ENCODE measurements at regions of chr6 and their contacts with region 1.

Region 1: DNA sequence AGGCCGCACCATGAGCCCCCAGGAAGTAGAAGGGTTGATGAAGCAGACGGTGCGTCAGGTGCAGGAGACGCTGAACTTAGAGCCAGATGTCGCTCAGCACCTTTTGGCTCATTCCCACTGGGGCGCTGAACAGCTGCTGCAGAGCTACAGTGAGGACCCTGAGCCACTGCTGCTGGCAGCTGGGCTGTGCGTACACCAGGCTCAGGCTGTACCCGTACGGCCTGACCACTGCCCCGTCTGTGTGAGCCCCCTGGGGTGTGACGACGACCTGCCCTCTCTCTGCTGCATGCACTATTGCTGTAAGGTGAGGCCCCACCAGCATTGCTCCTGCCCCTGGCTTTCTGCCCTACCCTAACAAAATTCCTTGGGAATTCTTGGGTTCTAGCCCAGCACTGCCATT is 13.1 kb downstream of the DNPH1 start:
- DNase-seq: no peak
- H3K4me3 ChIP-seq: no peak overlapping the region
- H3K27ac ChIP-seq: no peak overlapping the region
- H3K4me1 ChIP-seq: peaks cover 5% of the 10 kb centered on the region
- H3K27me3 ChIP-seq: no peaks in the 10 kb centered on the region
- CTCF ChIP-seq: no peak

Region 2: GRCh38 chr6:43024436-43024835 is 191.8 kb before region 1 on chr6:
- CTCF ChIA-PET with region 1: no interaction called
- dilution Hi-C with region 1: no loop called
- in situ Hi-C with region 1: no loop called
- intact Hi-C with region 1: no loop called
- DNase-seq: no peak
- H3K4me3 ChIP-seq: no peak overlapping the region
- H3K27ac ChIP-seq: no peak overlapping the region
- H3K4me1 ChIP-seq: peaks cover 7% of the 10 kb centered on the region
- H3K27me3 ChIP-seq: no peaks in the 10 kb centered on the region
- CTCF ChIP-seq: no peak

Region 3: DNA sequence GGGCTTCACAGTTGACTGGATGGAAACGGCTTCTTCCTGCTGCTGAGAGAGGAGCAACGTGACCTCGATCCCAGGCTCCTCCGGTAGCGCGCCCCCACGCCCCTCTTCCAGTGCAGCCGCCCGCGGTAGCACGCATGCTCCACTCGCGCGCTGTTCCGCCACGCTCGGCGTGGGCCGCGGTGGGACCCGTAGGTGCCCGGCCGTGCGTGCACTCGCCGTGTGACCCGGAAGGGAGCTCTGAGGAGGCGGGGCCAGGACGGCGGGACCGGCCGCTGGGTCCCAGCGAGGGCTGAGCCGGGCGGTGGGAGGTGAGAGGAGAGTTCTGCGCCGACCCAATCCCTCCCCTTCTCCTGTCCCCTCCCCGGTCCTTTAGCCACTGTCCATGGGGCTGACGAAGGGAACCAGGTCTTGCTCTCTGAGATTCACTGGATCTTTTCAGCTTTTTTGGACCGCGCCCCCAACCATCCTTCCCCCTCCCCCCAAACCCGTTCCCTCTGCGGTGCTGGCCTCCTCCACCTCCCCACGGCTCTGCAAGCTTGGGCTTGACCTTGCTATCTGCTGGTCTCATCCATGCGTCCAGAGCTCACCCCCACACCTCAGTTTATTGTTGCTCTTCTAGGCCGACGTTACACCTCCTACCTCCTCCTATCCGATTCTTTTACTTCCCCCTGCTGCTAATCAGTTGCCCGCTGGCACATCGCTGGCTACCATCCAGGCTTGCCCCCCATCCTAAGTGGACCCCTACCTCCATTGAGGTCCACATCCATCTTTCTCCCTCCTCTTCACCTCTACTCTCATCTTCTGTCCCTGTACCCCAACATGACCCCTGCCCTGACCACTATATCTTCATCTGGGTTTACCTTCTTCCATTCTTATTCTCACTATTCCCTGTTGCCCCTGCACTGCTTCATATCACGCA is 34.0 kb before region 1 on chr6 and contains the start of gene CUL9:
- CTCF ChIA-PET with region 1: no interaction called
- dilution Hi-C with region 1: loop called (anchors 5 kb)
- in situ Hi-C with region 1: no loop called
- intact Hi-C with region 1: no loop called
- DNase-seq: peak; percentile 52
- H3K4me3 ChIP-seq: peak within 1 kb of the TSS; percentile 20 to 70 (median 42)
- H3K27ac ChIP-seq: peak within 1 kb of the TSS; percentile 14
- H3K4me1 ChIP-seq: peaks cover 40% of the 10 kb centered on the region
- H3K27me3 ChIP-seq: no peaks in the 10 kb centered on the region
- CTCF ChIP-seq: no peak
- total RNA-seq, gene CUL9: 25.0 to 48.2 TPM

Region 4: GRCh38 chr6:43257367-43258145 is 41.4 kb after region 1 on chr6:
- CTCF ChIA-PET with region 1: no interaction called
- dilution Hi-C with region 1: loop called (anchors 5 kb)
- in situ Hi-C with region 1: no loop called
- intact Hi-C with region 1: no loop called
- DNase-seq: no peak
- H3K4me3 ChIP-seq: no peak overlapping the region
- H3K27ac ChIP-seq: no peak overlapping the region
- H3K4me1 ChIP-seq: no peaks in the 10 kb centered on the region
- H3K27me3 ChIP-seq: no peaks in the 10 kb centered on the region
- CTCF ChIP-seq: no peak

Region 5: DNA sequence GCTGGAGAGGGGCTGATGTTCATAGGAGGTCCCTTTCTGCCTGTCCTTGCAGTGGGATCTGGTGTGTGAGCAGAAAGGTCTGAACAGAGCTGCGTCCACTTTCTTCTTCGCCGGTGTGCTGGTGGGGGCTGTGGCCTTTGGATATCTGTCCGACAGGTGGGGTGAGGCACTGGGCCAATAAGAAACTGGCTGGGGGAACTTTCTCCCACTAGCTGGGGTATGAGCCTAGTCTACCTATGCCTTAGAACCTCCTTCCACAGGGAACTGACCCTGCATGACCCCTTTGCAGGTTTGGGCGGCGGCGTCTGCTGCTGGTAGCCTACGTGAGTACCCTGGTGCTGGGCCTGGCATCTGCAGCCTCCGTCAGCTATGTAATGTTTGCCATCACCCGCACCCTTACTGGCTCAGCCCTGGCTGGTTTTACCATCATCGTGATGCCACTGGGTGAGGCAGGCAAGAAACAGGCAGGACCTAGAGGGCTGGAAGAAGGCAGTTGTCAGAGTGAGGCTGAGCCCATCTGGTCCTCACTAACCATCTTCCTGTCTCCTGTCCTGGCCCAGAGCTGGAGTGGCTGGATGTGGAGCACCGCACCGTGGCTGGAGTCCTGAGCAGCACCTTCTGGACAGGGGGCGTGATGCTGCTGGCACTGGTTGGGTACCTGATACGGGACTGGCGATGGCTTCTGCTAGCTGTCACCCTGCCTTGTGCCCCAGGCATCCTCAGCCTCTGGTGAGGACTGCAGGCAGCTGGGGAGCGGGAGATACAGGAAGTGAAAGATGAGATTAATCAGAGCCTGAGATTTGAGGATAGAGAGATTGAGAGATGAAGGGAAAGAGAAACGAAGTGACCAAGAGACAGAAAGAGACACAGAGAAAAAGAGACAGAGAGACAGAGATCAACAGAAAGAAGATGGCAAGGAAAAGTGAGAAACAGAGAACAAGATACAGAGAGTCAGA is 83.4 kb after region 1 on chr6:
- CTCF ChIA-PET with region 1: no interaction called
- dilution Hi-C with region 1: loop called (anchors 5 kb)
- in situ Hi-C with region 1: no loop called
- intact Hi-C with region 1: no loop called
- DNase-seq: no peak
- H3K4me3 ChIP-seq: no peak overlapping the region
- H3K27ac ChIP-seq: no peak overlapping the region
- H3K4me1 ChIP-seq: no peaks in the 10 kb centered on the region
- H3K27me3 ChIP-seq: no peaks in the 10 kb centered on the region
- CTCF ChIP-seq: no peak

Region 6: GRCh38 chr6:43386492-43386891 is 170.3 kb after region 1 on chr6:
- CTCF ChIA-PET with region 1: no interaction called
- dilution Hi-C with region 1: no loop called
- in situ Hi-C with region 1: no loop called
- intact Hi-C with region 1: no loop called
- DNase-seq: no peak
- H3K4me3 ChIP-seq: no peak overlapping the region
- H3K27ac ChIP-seq: no peak overlapping the region
- H3K4me1 ChIP-seq: peaks cover 12% of the 10 kb centered on the region
- H3K27me3 ChIP-seq: no peaks in the 10 kb centered on the region
- CTCF ChIP-seq: peak in 1 of 2 donors; percentile 16

Region 7: GRCh38 chr6:43444036-43444435 is 227.8 kb after region 1 on chr6:
- CTCF ChIA-PET with region 1: no interaction called
- dilution Hi-C with region 1: loop called (anchors 5 kb)
- in situ Hi-C with region 1: no loop called
- intact Hi-C with region 1: no loop called
- DNase-seq: no peak
- H3K4me3 ChIP-seq: no peak overlapping the region
- H3K27ac ChIP-seq: no peak overlapping the region
- H3K4me1 ChIP-seq: no peaks in the 10 kb centered on the region
- H3K27me3 ChIP-seq: no peaks in the 10 kb centered on the region
- CTCF ChIP-seq: no peak